ENCODE measurements at regions of chr19 and their contacts with region 1.

Region 1: DNA sequence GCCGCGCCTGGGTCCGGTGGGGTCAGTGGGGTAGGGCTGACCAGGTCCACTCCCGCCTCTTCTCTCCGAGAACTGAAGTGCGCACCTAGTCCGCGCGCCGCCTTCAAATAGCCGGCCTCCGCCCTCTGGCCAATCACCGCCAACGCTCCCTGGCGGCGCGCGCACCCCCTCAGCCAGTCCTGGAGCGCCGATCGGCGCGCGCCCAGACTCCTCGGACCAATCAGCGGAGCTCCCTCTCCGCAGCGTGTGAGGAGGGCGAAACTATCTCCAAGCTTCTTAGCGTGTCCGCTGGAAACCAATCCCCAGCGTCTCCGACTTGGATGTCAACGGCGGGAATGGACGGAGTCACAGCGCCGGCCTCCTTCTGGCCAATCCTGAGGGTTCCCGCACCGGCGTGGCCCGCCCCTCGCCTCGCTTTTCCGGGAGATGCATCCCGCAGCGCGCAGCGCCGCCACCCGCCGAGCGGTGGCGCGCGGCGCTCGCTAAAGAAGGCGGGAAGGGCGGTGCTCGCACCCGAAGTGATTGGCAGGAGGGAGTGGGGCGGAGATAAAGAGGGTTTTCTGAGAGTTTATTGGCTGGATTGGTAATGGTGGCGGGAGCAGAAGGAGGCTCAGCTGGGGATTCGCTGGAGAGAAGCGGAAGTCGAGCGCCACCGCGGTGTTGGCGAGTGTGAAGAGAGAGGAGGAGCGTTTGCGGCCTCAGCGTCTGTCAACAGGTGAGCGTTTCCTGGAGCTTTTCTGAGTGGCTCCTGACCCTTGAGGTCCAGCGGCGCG is at the start of gene ASF1B:
- DNase-seq: peak; percentile 93 to 99 (median 96)
- ATAC-seq: peak; percentile 80
- H3K4me3 ChIP-seq: peak within 1 kb of the TSS; percentile 76 to 79
- H3K4me3 Mint-ChIP-seq: peak within 1 kb of the TSS; percentile 91
- H3K27ac ChIP-seq: peak within 1 kb of the TSS; percentile 73 to 92
- H3K27ac Mint-ChIP-seq: peak within 1 kb of the TSS; percentile 94
- H3K4me1 ChIP-seq: peaks cover 17% of the 10 kb centered on the region
- H3K4me1 Mint-ChIP-seq: peaks cover 33% of the 10 kb centered on the region
- H3K27me3 ChIP-seq: no peaks in the 10 kb centered on the region
- H3K27me3 Mint-ChIP-seq: no peaks in the 10 kb centered on the region
- CTCF ChIP-seq: peak; percentile 68
- total RNA-seq, gene ASF1B: 0.60 to 1.6 TPM

Region 2: DNA sequence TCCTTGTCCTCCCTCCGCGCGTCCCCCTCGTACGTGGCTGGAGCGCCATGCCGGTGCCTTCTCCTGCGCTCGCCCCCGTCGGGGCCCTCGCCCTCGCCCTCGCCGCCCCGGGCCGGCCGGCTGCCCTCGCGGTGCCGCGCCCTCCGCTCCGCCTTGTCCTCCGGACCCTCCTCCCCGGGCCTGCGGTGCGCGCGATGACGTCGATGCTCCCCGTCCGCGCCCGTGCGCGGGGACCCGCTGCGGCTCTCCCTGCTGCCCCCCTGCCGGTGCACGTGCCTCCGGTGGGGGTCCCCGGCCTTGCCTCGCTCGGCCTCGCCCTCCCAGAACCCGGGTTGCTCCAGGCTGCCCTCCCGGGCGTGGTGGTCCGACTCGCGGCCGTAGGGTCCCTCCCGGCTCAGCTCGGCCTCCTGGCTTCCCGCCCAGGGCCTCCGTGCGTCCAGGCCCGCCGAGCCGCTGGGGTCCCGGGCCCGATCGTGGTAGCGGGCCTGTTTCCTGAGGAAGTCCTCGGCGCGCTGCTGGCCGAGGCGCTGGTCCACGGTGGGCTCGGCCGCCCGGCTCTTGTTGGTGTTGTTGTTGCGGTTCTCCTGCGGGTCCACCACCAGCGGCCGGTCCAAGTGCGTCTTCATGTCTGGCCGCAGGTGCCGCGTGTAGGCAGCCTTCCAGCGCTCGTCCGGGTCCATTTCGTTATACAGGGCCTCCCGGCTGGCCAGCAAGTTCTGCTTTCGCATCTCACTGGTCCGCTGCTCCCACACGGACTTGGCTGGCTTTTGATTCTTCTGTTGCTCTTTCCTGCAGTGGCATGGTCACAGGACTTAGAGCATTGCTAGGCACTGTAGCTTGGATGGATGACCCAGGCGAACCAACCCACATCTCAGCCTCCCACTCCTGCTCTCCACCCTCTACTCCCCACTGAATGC is 837.9 kb before region 1 on chr19:
- CTCF ChIA-PET with region 1: no interaction called
- POLR2A ChIA-PET with region 1: no interaction called
- intact Hi-C with region 1: no loop called
- DNase-seq: no peak
- ATAC-seq: no peak
- H3K4me3 ChIP-seq: no peak overlapping the region
- H3K4me3 Mint-ChIP-seq: peak overlapping the region; percentile 50
- H3K27ac ChIP-seq: no peak overlapping the region
- H3K27ac Mint-ChIP-seq: no peak overlapping the region
- H3K4me1 ChIP-seq: no peaks in the 10 kb centered on the region
- H3K4me1 Mint-ChIP-seq: peaks cover 6% of the 10 kb centered on the region
- H3K27me3 ChIP-seq: peaks cover 3 to 7% of the 10 kb centered on the region in 2 experiments
- H3K27me3 Mint-ChIP-seq: peaks cover 50% of the 10 kb centered on the region
- CTCF ChIP-seq: no peak

Region 3: DNA sequence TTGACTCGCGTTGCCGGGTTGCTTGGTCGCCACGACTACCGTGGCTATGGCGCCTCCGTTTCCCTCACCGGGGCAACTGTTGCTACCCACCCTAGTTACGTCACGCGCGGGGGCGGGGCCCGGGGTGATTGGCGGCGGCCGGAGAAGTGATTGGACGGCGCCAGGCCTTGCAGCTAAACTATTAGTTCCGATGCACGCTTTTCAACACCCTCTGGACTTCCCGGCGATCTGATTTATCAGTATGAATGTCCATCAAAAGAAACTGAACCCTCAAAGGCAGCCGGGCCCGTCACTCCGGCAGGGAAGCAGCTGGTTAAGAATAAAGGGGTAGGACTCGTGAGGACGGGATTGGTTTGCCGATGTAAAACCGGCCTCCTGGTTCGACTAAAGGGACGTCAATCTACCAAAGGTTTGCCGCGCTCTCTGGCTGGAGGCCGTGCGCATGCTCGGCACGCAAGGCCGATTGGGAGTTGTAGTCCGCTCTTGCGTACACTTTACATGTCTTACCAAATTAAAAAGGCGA is 130.4 kb before region 1 on chr19 and contains the start of gene RFX1:
- CTCF ChIA-PET with region 1: interaction called, 3 read pairs
- POLR2A ChIA-PET with region 1: interaction called, 4 read pairs
- intact Hi-C with region 1: loop called (anchors 1 kb)
- DNase-seq: peak; percentile 99 to 100 (median 100)
- ATAC-seq: peak; percentile 69
- H3K4me3 ChIP-seq: peak within 1 kb of the TSS; percentile 87 to 92
- H3K4me3 Mint-ChIP-seq: peak within 1 kb of the TSS; percentile 89
- H3K27ac ChIP-seq: peak within 1 kb of the TSS; percentile 99 to 100
- H3K27ac Mint-ChIP-seq: peak within 1 kb of the TSS; percentile 98
- H3K4me1 ChIP-seq: peaks cover 40% of the 10 kb centered on the region
- H3K4me1 Mint-ChIP-seq: peaks cover 42% of the 10 kb centered on the region
- H3K27me3 ChIP-seq: no peaks in the 10 kb centered on the region
- H3K27me3 Mint-ChIP-seq: no peaks in the 10 kb centered on the region
- CTCF ChIP-seq: no peak
- total RNA-seq, gene RFX1: 11.2 to 13.0 TPM

Region 4: GRCh38 chr19:14091081-14091812 is 45.4 kb before region 1 on chr19:
- CTCF ChIA-PET with region 1: interaction called, 4 read pairs
- POLR2A ChIA-PET with region 1: interaction called, 20 read pairs
- intact Hi-C with region 1: loop called (anchors 1 kb)
- DNase-seq: peak in 8 of 9 experiments; percentile 37 to 84 (median 69)
- ATAC-seq: peak; percentile 42
- H3K4me3 ChIP-seq: peak overlapping the region; percentile 82 to 87
- H3K4me3 Mint-ChIP-seq: peak overlapping the region; percentile 99
- H3K27ac ChIP-seq: peak overlapping the region; percentile 51 to 66
- H3K27ac Mint-ChIP-seq: peak overlapping the region; percentile 98
- H3K4me1 ChIP-seq: peaks cover 13% of the 10 kb centered on the region
- H3K4me1 Mint-ChIP-seq: peaks cover 22% of the 10 kb centered on the region
- H3K27me3 ChIP-seq: no peaks in the 10 kb centered on the region
- H3K27me3 Mint-ChIP-seq: no peaks in the 10 kb centered on the region
- CTCF ChIP-seq: peak; percentile 40

Region 5: DNA sequence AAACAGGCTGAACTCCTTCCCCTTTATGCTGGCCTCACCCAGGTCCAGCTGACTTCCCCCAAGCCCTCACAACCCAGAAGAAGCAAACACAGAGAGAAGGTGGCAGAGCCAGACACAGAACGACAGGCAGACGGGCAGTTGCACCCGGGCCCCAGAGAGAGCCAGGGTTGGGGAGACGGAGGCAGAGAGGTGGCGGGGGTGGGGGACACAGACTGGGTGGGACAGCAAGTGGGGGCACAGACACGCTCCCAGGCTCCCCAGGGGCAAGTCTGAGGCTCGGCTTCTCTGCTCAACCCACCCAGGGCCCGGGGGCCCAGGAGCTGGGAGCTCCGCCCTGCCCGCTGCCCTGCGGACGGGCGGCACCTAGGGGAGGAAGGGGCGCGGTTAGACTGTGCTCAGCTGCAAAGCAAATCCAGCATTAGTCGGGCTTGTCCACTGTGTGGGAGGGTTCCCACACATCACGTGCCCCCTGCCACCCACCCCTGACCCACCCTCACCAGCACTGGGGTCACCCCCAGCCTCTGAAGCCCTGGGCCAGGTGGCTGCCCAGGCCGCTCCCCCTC is 31.0 kb after region 1 on chr19:
- CTCF ChIA-PET with region 1: interaction called, 4 read pairs
- POLR2A ChIA-PET with region 1: interaction called, 5 read pairs
- intact Hi-C with region 1: loop called in 1 of 2 experiments (anchors 1 kb)
- DNase-seq: peak in 7 of 9 experiments; percentile 19 to 71 (median 44)
- ATAC-seq: peak; percentile 72
- H3K4me3 ChIP-seq: peak overlapping the region; percentile 40 to 44
- H3K4me3 Mint-ChIP-seq: peak overlapping the region; percentile 86
- H3K27ac ChIP-seq: peak overlapping the region; percentile 46 to 53
- H3K27ac Mint-ChIP-seq: peak overlapping the region; percentile 84
- H3K4me1 ChIP-seq: peaks cover 31% of the 10 kb centered on the region
- H3K4me1 Mint-ChIP-seq: peaks cover 23% of the 10 kb centered on the region
- H3K27me3 ChIP-seq: no peaks in the 10 kb centered on the region
- H3K27me3 Mint-ChIP-seq: no peaks in the 10 kb centered on the region
- CTCF ChIP-seq: no peak

Region 6: GRCh38 chr19:14366498-14366915 is 229.8 kb after region 1 on chr19:
- CTCF ChIA-PET with region 1: interaction called, 6 read pairs
- POLR2A ChIA-PET with region 1: interaction called, 6 read pairs
- intact Hi-C with region 1: loop called in 1 of 2 experiments (anchors 5 kb)
- DNase-seq: peak; percentile 83 to 97 (median 90)
- ATAC-seq: peak; percentile 45
- H3K4me3 ChIP-seq: no peak overlapping the region
- H3K4me3 Mint-ChIP-seq: peak overlapping the region; percentile 57
- H3K27ac ChIP-seq: peak overlapping the region; percentile 98 to 100
- H3K27ac Mint-ChIP-seq: peak overlapping the region; percentile 99
- H3K4me1 ChIP-seq: peaks cover 81% of the 10 kb centered on the region
- H3K4me1 Mint-ChIP-seq: peaks cover 68% of the 10 kb centered on the region
- H3K27me3 ChIP-seq: no peaks in the 10 kb centered on the region
- H3K27me3 Mint-ChIP-seq: no peaks in the 10 kb centered on the region
- CTCF ChIP-seq: no peak

Region 7: GRCh38 chr19:14472202-14472938 is 335.7 kb after region 1 on chr19:
- CTCF ChIA-PET with region 1: interaction called, 8 read pairs
- POLR2A ChIA-PET with region 1: interaction called, 8 read pairs
- intact Hi-C with region 1: loop called (anchors 2 to 5 kb)
- DNase-seq: peak; percentile 81 to 94 (median 87)
- ATAC-seq: peak; percentile 81
- H3K4me3 ChIP-seq: peak overlapping the region; percentile 8 to 40
- H3K4me3 Mint-ChIP-seq: peak overlapping the region; percentile 62
- H3K27ac ChIP-seq: no peak overlapping the region
- H3K27ac Mint-ChIP-seq: no peak overlapping the region
- H3K4me1 ChIP-seq: peaks cover 33% of the 10 kb centered on the region
- H3K4me1 Mint-ChIP-seq: peaks cover 33% of the 10 kb centered on the region
- H3K27me3 ChIP-seq: peaks cover 13 to 21% of the 10 kb centered on the region in 2 experiments
- H3K27me3 Mint-ChIP-seq: peaks cover 18% of the 10 kb centered on the region
- CTCF ChIP-seq: peak; percentile 99

Region 8: DNA sequence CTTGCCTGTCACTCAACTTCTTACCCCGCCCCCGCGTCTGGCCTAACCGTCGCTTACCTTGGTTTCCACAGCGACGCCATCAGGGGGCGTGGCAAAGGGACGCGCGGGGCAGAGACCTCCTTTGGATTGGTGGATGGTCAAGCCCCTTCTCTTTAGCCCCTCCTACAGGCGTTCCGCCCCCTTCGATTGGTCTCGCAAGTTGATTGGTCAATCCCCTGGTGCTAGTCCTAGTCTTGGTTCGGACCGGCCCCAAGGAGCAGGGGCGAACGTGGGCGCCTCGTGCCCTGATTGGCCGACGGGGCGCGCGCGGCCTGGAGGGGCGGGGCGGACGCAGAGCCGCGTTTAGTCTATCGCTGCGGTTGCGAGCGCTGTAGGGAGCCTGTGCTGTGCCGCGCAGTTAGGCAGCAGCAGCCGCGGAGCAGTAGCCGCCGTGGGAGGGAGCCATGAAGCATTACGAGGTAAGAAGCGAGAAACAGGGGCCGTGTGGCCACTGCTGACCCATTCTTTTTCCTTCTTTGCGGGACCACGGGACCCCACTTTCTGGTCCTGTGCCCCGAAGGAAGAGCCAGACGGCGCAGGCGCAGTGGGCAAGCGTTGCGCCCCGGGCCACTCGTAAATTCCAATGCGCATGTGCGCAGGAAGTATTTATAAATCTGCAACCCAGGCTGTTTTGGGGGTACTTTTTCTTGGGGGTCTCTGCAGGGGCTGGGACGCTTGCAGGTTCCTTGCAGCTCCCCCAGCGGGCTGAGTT is 392.7 kb after region 1 on chr19 and contains the start of gene TECR:
- CTCF ChIA-PET with region 1: interaction called, 4 read pairs
- POLR2A ChIA-PET with region 1: no interaction called
- intact Hi-C with region 1: loop called in 1 of 2 experiments (anchors 2 kb)
- DNase-seq: peak; percentile 100
- ATAC-seq: peak; percentile 93
- H3K4me3 ChIP-seq: peak within 1 kb of the TSS; percentile 85 to 97
- H3K4me3 Mint-ChIP-seq: peak within 1 kb of the TSS; percentile 97
- H3K27ac ChIP-seq: peak within 1 kb of the TSS; percentile 88 to 89
- H3K27ac Mint-ChIP-seq: peak within 1 kb of the TSS; percentile 98
- H3K4me1 ChIP-seq: peaks cover 28% of the 10 kb centered on the region
- H3K4me1 Mint-ChIP-seq: peaks cover 54% of the 10 kb centered on the region
- H3K27me3 ChIP-seq: no peaks in the 10 kb centered on the region
- H3K27me3 Mint-ChIP-seq: no peaks in the 10 kb centered on the region
- CTCF ChIP-seq: no peak
- total RNA-seq, gene TECR: 300 to 325 TPM